Activated T-helper 2 cell treated with anti-CD3 and anti-CD28 coated beads, Interferon-gamma antibody, Interleukin-2, Interleukin-4, amounts not matched to agents 10 μg/mL and 5 μg/mL and 100 μg/mL, durations not matched to agents 14 hours and 24 hours and 36 hours (primary cell): ENCODE measurements at regions of chr17 and their contacts with region 1.

Region 1: DNA sequence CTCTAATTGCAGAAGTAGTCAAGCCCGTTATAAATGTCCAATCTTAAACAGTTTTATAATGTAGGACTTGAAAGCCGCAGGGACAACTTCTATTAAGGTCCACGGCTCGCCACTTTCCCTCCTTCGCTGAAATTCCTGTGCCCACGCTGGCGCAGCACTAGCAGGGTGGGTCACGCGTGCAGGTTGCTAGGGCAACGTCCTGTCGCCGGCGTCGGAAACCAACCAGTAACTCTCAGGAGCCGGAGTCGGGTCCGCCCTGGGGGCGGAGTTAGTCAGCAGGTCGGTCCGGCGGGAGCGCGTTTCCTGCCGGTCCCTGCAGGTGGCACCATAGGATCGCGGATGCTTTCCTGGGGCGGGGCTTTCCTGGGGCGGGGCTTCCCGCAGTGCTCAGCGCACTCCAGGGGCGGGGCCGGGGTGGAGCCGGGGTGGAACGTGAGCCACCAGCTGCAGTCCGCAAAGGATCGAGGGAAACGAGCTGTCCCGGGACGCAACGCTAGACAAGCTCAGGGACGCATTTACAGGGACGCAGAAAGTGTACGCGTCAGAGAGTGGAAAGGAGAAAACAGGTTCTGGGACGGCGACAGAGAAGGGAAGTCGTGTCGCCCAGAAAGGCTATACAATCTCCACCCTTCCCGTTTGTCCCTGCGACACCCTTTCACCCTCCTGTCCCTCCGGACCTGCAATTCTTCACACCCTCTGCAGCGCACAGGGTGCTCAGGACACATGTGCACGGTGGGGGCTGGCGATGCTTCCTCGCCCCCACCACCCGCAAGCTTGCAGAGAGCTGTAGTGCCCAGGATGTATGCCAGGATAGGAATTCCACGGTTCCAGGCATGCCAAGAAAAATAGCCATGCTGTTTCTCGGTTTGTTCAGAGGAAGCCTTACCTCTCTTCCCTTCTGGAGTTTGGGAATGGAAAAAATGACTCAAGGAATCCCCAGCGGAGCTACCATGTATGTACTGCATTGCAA is 12.4 kb downstream of the COPZ2 start:
- DNase-seq: peak; percentile 94
- H3K4me3 Mint-ChIP-seq: peak overlapping the region; percentile 86
- H3K27ac Mint-ChIP-seq: peak overlapping the region; percentile 82
- H3K4me1 Mint-ChIP-seq: peaks cover 28% of the 10 kb centered on the region
- H3K27me3 Mint-ChIP-seq: peaks cover 33% of the 10 kb centered on the region

Region 2: DNA sequence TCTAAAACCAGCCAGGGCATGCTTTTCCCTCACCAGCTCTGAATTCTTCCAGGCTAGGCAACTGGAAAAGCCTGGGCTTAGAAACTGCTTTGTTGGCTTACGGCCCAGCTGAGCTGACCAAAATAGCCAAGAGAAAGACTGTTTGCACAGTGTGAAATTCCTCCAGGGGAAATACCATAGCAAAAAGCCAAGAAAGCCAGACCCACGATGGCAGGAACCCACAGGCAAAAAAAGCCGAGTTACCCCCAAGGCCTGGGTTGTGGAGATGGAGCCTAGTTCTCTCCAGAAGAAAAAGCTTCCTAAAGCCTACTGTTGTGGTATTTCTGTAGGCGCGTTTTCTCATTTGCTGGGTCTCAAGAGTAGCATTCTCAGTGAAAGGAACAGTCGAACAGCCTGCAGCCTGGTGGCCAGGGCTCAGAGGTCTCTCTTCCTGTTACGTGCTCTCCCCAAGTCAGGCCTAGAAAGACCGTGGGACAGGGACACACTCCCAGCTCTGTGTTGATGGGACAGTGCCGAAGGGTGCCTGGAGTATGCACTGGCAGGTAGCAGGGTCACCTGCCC is 119.9 kb before region 1 on chr17:
- intact Hi-C with region 1: no loop called
- DNase-seq: no peak
- H3K4me3 Mint-ChIP-seq: no peak overlapping the region
- H3K27ac Mint-ChIP-seq: no peak overlapping the region
- H3K4me1 Mint-ChIP-seq: peaks cover 5% of the 10 kb centered on the region
- H3K27me3 Mint-ChIP-seq: no peaks in the 10 kb centered on the region

Region 3: DNA sequence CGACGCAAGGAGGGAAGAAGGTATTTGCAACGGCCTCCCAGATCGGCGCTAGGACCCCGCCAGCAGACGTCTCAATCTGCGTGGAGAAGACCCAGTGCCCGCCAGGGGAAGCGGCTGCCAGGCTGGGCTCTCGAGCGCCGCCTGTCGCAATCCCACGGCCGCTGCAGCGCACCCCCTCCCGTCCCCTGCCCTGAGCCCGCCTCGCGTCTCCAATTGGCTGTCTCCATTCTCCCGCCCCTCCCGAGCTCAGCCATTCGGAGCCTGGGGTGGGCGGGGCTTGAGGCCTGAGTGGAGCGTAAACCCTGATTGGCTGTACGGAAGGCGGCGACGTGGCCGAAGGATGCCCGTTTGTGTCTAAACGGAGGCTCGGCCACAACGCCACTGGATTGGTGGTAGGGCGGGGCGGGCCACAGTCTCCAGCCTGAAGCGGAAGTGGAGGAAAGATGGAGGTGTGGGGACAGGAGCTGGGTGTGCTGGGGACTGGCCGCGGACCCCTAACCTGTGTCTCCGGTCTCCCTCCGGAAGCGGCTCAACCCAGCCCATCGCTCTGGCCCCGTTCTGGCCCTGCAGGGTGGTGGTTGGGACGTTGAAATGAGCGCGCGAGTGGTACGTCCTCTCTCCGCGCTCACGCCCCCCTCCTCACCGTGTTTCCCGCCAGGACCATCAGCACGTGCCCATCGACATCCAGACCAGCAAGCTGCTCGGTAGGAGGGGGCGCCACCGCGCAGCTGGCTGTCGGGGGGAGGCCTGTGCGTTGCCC is 54.3 kb before region 1 on chr17 and contains the start of gene CDK5RAP3:
- intact Hi-C with region 1: loop called (anchors 2 kb)
- DNase-seq: peak; percentile 99
- H3K4me3 Mint-ChIP-seq: peak within 1 kb of the TSS; percentile 95
- H3K27ac Mint-ChIP-seq: peak within 1 kb of the TSS; percentile 91
- H3K4me1 Mint-ChIP-seq: peaks cover 28% of the 10 kb centered on the region
- H3K27me3 Mint-ChIP-seq: peaks cover 1% of the 10 kb centered on the region
- total RNA-seq, gene CDK5RAP3: 192 and 199 TPM in 2 replicates

Region 4: GRCh38 chr17:48074315-48075081 is 49.3 kb after region 1 on chr17:
- intact Hi-C with region 1: loop called (anchors 1 kb)
- DNase-seq: peak; percentile 50
- H3K4me3 Mint-ChIP-seq: no peak overlapping the region
- H3K27ac Mint-ChIP-seq: no peak overlapping the region
- H3K4me1 Mint-ChIP-seq: peaks cover 5% of the 10 kb centered on the region
- H3K27me3 Mint-ChIP-seq: no peaks in the 10 kb centered on the region

Region 5: DNA sequence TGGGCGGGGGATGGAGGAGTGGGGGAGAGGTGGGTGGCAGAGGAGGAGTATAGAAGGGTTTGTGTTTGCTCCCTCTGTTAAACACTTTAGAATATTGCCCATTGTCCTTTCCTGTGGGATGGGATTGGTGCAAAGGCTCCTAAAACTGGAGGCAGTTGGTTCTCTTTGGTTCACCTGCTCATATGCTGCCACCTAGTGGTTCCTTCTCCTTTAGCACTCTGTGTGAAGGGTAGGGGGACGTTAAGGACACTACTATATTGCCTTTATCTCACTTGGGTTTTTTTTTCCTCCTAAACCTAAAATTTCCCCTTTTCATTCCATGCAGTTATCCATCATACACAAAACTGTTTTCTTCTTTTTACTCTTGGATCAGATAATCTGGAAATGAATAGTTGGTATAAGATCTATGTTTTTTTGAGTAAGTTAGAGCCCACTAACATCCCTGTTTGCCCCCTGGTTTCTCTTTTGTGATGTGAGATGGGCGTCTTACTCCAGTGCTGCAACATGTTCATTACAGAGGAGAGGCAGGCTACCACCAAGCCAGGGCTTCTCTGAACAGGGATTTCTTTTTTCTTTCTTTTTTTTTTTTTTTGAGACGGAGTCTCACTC is 106.1 kb after region 1 on chr17:
- intact Hi-C with region 1: loop called (anchors 1 kb)
- DNase-seq: no peak
- H3K4me3 Mint-ChIP-seq: no peak overlapping the region
- H3K27ac Mint-ChIP-seq: no peak overlapping the region
- H3K4me1 Mint-ChIP-seq: peaks cover 2% of the 10 kb centered on the region
- H3K27me3 Mint-ChIP-seq: no peaks in the 10 kb centered on the region

Region 6: GRCh38 chr17:48543107-48543853 is 518.1 kb after region 1 on chr17:
- intact Hi-C with region 1: loop called (anchors 5 kb)
- DNase-seq: peak; percentile 63
- H3K4me3 Mint-ChIP-seq: peak overlapping the region; percentile 94
- H3K27ac Mint-ChIP-seq: peak overlapping the region; percentile 94
- H3K4me1 Mint-ChIP-seq: peaks cover 36% of the 10 kb centered on the region
- H3K27me3 Mint-ChIP-seq: peaks cover 1% of the 10 kb centered on the region